Endothelial cell of umbilical vein (primary cell): ENCODE measurements at regions of chr5 and their contacts with region 1.

Region 1: GRCh38 chr5:141701360-141702119 is 19.5 kb upstream of the ARAP3 start:
- DNase-seq: no peak
- H3K4me3 ChIP-seq: no peak overlapping the region
- H3K27ac ChIP-seq: no peak overlapping the region
- H3K4me1 ChIP-seq: peaks cover 5% of the 10 kb centered on the region
- H3K27me3 ChIP-seq: peaks cover 19 to 33% of the 10 kb centered on the region in 2 experiments
- CTCF ChIP-seq: no peak
- POLR2A ChIP-seq: no peak

Region 2: GRCh38 chr5:141811287-141812155 is 110.0 kb after region 1 on chr5:
- CTCF ChIA-PET with region 1: interaction called, 3 read pairs
- POLR2A ChIA-PET with region 1: no interaction called
- dilution Hi-C with region 1: no loop called
- intact Hi-C with region 1: loop called (anchors 2 kb)
- DNase-seq: no peak
- H3K4me3 ChIP-seq: no peak overlapping the region
- H3K27ac ChIP-seq: no peak overlapping the region
- H3K4me1 ChIP-seq: peaks cover 10% of the 10 kb centered on the region
- H3K27me3 ChIP-seq: peaks cover 0 to 1% of the 10 kb centered on the region in 2 experiments
- CTCF ChIP-seq: peak; percentile 72 to 77
- POLR2A ChIP-seq: no peak

Region 3: GRCh38 chr5:141914199-141914743 is 212.7 kb after region 1 on chr5:
- CTCF ChIA-PET with region 1: interaction called, 3 read pairs
- POLR2A ChIA-PET with region 1: no interaction called
- dilution Hi-C with region 1: no loop called
- intact Hi-C with region 1: loop called (anchors 1 kb)
- DNase-seq: peak; percentile 9
- H3K4me3 ChIP-seq: peak overlapping the region in 1 of 3 experiments; percentile 20
- H3K27ac ChIP-seq: no peak overlapping the region
- H3K4me1 ChIP-seq: peaks cover 3% of the 10 kb centered on the region
- H3K27me3 ChIP-seq: peaks cover 9 to 14% of the 10 kb centered on the region in 2 experiments
- CTCF ChIP-seq: peak in 1 of 2 donors; percentile 43
- POLR2A ChIP-seq: no peak